SK-N-SH (cell line): ENCODE measurements at regions of chr2 and their contacts with region 1.

Region 1: DNA sequence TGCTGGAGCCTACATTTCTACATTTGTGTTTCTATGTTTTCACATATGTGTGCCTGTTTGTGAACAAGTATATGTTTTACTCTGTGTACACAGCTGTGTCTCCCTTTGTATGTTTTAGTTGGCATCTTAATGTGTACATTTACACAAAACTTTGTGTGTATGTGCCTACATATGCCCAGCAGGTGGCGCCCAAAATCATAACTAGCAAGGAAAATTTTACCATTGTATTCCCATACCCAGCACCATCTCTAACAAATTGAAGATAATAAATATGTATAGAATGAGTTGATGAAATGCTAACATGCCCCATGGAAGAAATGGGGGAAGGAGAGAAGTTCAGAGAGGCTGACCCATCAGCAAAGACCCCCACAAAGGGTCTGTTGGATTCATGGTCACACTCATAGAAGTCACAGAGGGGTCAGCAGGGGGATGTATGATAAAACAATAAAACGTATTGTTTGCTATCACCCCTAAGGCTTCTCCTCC is 48.1 kb downstream of the PKDCC start:
- DNase-seq: peak; percentile 78
- H3K4me3 ChIP-seq: no peak overlapping the region
- H3K27ac ChIP-seq: peak overlapping the region in 1 of 2 experiments; percentile 24; a peak in 2 of 4 replicates
- H3K4me1 ChIP-seq: peaks cover 0 to 15% of the 10 kb centered on the region in 2 experiments; a peak in 1 of 4 replicates
- H3K27me3 ChIP-seq: no peaks in the 10 kb centered on the region
- CTCF ChIP-seq: peak; percentile 98
- EP300 ChIP-seq: no peak; a peak in 1 of 4 replicates
- RAD21 ChIP-seq: peak; percentile 100

Region 2: DNA sequence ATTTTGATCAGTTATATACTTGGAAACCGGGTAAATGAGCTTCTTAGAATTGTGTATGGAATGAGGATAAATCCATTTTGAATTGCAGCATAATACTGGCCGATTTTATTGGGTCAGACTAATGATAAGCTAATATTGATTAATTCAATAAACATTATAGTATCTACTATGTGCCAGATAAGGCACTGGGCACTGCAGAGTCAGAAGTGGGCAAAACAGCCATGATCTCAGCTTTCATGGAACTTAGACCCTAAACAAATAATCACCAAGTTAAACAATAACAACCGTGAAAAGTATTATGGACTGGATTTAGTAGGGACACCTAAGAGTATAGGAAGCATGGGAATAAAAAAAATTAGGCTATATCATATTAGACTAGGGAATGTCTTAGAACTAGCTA is 345.1 kb before region 1 on chr2:
- CTCF ChIA-PET with region 1: no interaction called
- POLR2A ChIA-PET with region 1: no interaction called
- DNase-seq: no peak
- H3K4me3 ChIP-seq: no peak overlapping the region
- H3K27ac ChIP-seq: no peak overlapping the region
- H3K4me1 ChIP-seq: no peaks in the 10 kb centered on the region
- H3K27me3 ChIP-seq: no peaks in the 10 kb centered on the region
- CTCF ChIP-seq: no peak
- EP300 ChIP-seq: no peak
- RAD21 ChIP-seq: no peak

Region 3: GRCh38 chr2:41840702-41841551 is 255.0 kb before region 1 on chr2:
- CTCF ChIA-PET with region 1: interaction called, 19 read pairs
- POLR2A ChIA-PET with region 1: no interaction called
- DNase-seq: peak; percentile 96
- H3K4me3 ChIP-seq: peak overlapping the region; percentile 79 to 98
- H3K27ac ChIP-seq: peak overlapping the region; percentile 9 to 91; a peak in 3 of 4 replicates
- H3K4me1 ChIP-seq: peaks cover 0 to 10% of the 10 kb centered on the region in 2 experiments; a peak in 2 of 4 replicates
- H3K27me3 ChIP-seq: no peaks in the 10 kb centered on the region; the same call in 1 of the 2 replicates
- CTCF ChIP-seq: peak; percentile 99
- EP300 ChIP-seq: peak in 1 of 2 experiments; percentile 40; a peak in 1 of 4 replicates
- RAD21 ChIP-seq: peak; percentile 90

Region 4: DNA sequence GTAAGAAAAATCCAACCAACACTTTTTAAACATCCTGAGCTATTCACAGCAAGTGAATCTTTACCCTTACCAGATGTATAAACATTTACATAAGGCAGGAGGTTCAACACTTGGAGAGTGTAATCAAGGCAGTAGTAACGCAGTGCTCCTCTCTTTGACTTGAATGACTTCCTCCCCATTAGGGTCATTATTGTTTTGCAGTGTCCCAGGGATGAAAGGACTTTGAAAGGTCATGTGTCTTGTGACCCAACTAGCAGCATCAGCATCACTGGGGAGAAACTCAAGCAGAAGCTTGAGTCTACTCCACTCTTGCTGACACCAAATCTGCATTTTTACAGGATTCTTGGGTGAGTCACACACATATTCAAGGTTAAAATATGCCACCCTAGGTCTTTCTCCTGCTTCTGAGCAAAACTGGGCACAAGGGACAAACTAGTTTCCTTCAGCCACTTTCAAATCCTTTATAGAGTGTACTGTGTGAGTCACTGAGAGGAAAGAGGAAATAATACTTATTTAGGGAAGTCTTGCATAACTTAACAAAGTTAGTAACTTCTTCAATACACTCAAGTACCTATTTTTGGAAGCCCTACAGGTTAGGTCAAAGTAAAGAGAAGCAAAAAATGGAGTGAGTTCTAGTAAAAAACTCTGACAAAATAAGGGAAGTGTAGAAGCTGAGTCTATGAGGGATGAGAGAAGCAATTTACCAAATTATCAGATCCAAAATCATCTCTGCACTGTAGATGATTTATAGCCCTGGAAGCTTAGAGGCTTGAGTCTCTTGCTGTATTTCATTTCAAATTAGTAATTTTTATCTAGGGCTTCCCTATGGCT is 22.2 kb after region 1 on chr2:
- CTCF ChIA-PET with region 1: interaction called, 44 read pairs
- POLR2A ChIA-PET with region 1: no interaction called
- DNase-seq: no peak
- H3K4me3 ChIP-seq: peak overlapping the region in 1 of 2 experiments; percentile 9; a peak in 1 of 4 replicates
- H3K27ac ChIP-seq: peak overlapping the region; percentile 86 to 94
- H3K4me1 ChIP-seq: peaks cover 21 to 30% of the 10 kb centered on the region in 2 experiments
- H3K27me3 ChIP-seq: no peaks in the 10 kb centered on the region
- CTCF ChIP-seq: no peak
- EP300 ChIP-seq: peak; percentile 52 to 74; a peak in 3 of 4 replicates
- RAD21 ChIP-seq: no peak; the same call in 1 of the 2 replicates

Region 5: DNA sequence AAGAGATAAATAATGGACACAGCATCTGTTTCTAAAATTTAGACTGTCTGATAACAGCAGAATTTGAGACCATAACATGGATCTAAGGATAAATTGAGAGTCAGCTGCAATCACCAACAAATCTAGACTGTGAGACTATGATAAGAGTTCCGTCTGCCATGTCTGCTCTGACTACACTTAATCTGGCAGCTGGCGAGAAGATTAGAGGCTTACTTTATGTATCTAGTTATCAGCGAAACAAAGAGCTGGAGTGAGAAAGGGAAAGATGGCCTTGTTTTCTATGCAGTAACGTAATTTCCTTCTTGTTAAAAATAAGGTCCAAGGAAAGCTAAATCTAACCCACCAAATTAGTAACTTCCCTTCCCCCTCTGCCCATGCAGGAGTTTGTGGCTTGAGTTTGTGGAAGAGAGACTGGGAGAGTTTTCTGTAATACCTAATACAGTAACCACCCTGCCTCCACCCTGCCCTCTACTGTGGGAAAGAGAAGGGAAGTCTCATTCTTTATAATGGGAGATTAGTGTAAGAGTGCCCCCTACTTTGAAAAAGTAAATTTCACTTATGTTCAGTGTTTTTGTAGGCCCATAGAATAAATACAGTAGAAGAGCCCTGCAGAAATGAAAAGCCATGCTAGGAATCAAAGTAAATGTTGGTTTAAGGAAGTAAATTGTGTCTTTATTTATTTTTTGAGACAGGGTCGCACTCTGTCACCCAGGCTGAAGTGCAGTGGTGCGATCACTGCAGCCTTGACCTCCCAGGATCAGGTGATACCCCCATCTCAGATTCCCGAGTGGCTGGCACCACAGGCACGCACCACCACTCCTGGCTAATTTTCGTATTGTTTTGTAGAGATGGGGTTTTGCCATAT is 100.7 kb after region 1 on chr2:
- CTCF ChIA-PET with region 1: interaction called, 59 read pairs
- POLR2A ChIA-PET with region 1: no interaction called
- DNase-seq: peak; percentile 77
- H3K4me3 ChIP-seq: no peak overlapping the region; a peak in 1 of 4 replicates
- H3K27ac ChIP-seq: peak overlapping the region; percentile 4 to 94; a peak in 3 of 4 replicates
- H3K4me1 ChIP-seq: peaks cover 31 to 42% of the 10 kb centered on the region in 2 experiments; a peak in 3 of 4 replicates
- H3K27me3 ChIP-seq: no peaks in the 10 kb centered on the region
- CTCF ChIP-seq: peak; percentile 59
- EP300 ChIP-seq: peak in 1 of 2 experiments; percentile 93; a peak in 2 of 4 replicates
- RAD21 ChIP-seq: peak; percentile 90

Region 6: DNA sequence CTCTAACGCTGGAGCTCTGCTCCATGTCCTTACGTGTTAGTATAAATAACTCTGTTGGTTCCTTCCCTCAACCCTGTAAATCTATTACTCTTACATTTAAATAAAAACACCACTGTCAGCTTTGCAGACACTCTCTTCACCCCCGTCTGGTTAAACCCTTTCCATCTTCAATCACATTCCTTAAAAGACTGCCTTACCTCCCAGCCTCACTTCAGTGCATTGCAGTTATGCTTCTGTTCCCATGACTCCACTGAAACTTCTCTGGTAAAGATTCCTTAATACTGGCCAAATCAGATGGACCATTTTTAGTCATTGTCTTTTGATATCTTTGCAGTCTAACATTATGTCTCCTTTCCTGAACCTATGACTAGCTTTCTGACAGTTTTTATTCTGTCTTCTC is 134.9 kb after region 1 on chr2:
- CTCF ChIA-PET with region 1: interaction called, 12 read pairs
- POLR2A ChIA-PET with region 1: no interaction called
- DNase-seq: no peak
- H3K4me3 ChIP-seq: no peak overlapping the region
- H3K27ac ChIP-seq: no peak overlapping the region
- H3K4me1 ChIP-seq: peaks cover 3 to 10% of the 10 kb centered on the region in 2 experiments; a peak in 2 of 4 replicates
- H3K27me3 ChIP-seq: no peaks in the 10 kb centered on the region
- CTCF ChIP-seq: no peak
- EP300 ChIP-seq: no peak
- RAD21 ChIP-seq: no peak

Region 7: GRCh38 chr2:42342061-42342794 is 246.3 kb after region 1 on chr2:
- CTCF ChIA-PET with region 1: interaction called, 12 read pairs
- POLR2A ChIA-PET with region 1: no interaction called
- DNase-seq: peak; percentile 58
- H3K4me3 ChIP-seq: no peak overlapping the region
- H3K27ac ChIP-seq: peak overlapping the region; percentile 41 to 92; a peak in 3 of 4 replicates
- H3K4me1 ChIP-seq: peaks cover 17 to 19% of the 10 kb centered on the region in 2 experiments; a peak in 3 of 4 replicates
- H3K27me3 ChIP-seq: no peaks in the 10 kb centered on the region
- CTCF ChIP-seq: no peak
- EP300 ChIP-seq: no peak; a peak in 1 of 4 replicates
- RAD21 ChIP-seq: no peak

Region 8: GRCh38 chr2:42513257-42513918 is 417.4 kb after region 1 on chr2:
- CTCF ChIA-PET with region 1: no interaction called
- POLR2A ChIA-PET with region 1: no interaction called
- DNase-seq: peak; percentile 53
- H3K4me3 ChIP-seq: no peak overlapping the region
- H3K27ac ChIP-seq: no peak overlapping the region
- H3K4me1 ChIP-seq: peaks cover 4 to 6% of the 10 kb centered on the region in 2 experiments; a peak in 2 of 4 replicates
- H3K27me3 ChIP-seq: no peaks in the 10 kb centered on the region
- CTCF ChIP-seq: peak; percentile 71
- EP300 ChIP-seq: no peak
- RAD21 ChIP-seq: peak; percentile 71